Panc1 (cell line): ENCODE measurements at regions of chr11 and their contacts with region 1.

Region 1: DNA sequence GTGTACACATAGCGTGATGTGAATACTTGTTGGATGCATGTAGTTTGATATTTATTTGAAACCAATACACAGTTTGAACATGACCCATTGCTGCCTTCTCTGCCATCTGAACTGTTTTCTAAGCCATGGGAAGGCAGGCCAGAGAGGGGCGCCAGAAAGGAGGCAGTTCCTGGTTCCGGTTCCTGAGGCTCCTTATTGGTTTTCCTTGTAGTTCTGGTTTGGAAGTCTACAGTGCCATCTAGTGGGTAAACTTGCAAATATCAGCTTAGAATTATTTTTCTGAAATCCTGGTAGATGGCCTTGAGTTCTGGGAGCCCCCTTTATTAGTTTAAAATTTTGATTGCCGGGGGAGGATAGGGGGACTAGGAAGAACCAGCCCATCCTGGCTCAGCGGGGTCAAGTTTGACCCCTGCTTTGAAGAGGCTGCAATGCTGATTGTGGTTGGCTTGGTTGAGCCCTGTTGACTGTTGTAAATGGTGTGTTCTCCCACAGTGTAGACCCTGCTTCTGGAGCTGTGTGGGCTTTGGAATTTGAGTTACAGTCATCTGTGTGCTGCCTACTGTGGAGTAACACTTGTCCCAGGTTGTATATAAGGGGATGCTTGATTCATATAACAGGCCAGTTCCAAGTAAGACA is 48.4 kb downstream of the GRAMD1B start:
- DNase-seq: peak; percentile 61
- ATAC-seq: peak; percentile 85
- H3K4me3 ChIP-seq: 0 out of 4 replicates have a peak overlapping the region, but pooled peaks of 1 of the 2 experiments have one; percentile 1
- H3K27ac ChIP-seq: no peak overlapping the region
- H3K4me1 ChIP-seq: no peaks in the 10 kb centered on the region
- H3K27me3 ChIP-seq: peaks cover 10% of the 10 kb centered on the region
- CTCF ChIP-seq: peak; percentile 86

Region 2: DNA sequence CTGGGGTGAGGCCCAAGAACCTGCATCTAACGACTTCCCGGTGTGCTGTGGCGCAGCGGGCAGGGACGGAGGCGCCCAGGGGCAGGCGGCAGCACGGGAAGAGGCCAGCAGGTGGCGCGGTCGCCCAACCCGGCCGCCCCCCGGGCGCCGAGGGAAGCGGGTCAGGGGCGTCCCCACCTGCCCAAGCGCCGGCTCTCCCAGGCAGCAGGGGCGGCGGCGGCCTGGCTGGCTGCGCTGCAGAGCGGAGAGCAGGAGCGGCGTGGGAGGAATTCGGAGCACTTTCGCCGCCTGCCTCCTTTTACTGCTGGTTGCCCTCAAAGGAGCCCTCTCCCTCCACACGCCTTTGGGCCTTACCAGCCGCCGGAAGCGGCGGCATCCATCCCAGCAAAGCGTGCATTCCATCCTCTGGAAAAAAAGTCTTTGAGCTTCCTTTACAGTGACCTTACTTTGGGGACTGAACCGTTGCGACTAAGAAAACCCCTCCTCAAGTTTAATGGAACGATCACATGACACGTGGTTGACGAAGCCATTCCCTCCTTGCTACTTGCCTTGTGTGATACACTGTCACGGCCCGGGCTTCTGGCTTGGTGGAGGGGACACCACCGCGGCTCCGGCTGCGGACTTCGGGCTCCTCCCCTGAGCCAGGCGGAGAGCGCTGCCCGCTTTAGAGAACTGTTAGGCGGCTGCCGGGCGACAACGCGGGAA is 176.6 kb before region 1 on chr11:
- CTCF ChIA-PET with region 1: no interaction called
- POLR2A ChIA-PET with region 1: no interaction called
- in situ Hi-C with region 1: no loop called
- intact Hi-C with region 1: loop called (anchors 1 kb)
- DNase-seq: peak; percentile 8
- ATAC-seq: peak; percentile 89
- H3K4me3 ChIP-seq: peak overlapping the region; percentile 11 to 21; a peak in 3 of 4 replicates
- H3K27ac ChIP-seq: no peak overlapping the region
- H3K4me1 ChIP-seq: peaks cover 14% of the 10 kb centered on the region; the same call in 1 of the 2 replicates
- H3K27me3 ChIP-seq: peaks cover 29% of the 10 kb centered on the region
- CTCF ChIP-seq: peak; percentile 99

Region 3: GRCh38 chr11:123407130-123407995 is 71.1 kb before region 1 on chr11:
- CTCF ChIA-PET with region 1: interaction called, 22 read pairs
- POLR2A ChIA-PET with region 1: interaction called, 3 read pairs
- in situ Hi-C with region 1: no loop called
- intact Hi-C with region 1: loop called (anchors 1 kb)
- DNase-seq: peak; percentile 43
- ATAC-seq: peak; percentile 93
- H3K4me3 ChIP-seq: no peak overlapping the region
- H3K27ac ChIP-seq: no peak overlapping the region
- H3K4me1 ChIP-seq: no peaks in the 10 kb centered on the region
- H3K27me3 ChIP-seq: peaks cover 34% of the 10 kb centered on the region
- CTCF ChIP-seq: peak; percentile 87